ENCODE measurements at regions of chr5 and their contacts with region 1.

Region 1: GRCh38 chr5:135140805-135141204 is 106.8 kb upstream of the PITX1 start:
- DNase-seq: no peak

Region 2: GRCh38 chr5:135151256-135151655 is 10.5 kb after region 1 on chr5:
- intact Hi-C with region 1: no loop called
- DNase-seq: no peak

Region 3: DNA sequence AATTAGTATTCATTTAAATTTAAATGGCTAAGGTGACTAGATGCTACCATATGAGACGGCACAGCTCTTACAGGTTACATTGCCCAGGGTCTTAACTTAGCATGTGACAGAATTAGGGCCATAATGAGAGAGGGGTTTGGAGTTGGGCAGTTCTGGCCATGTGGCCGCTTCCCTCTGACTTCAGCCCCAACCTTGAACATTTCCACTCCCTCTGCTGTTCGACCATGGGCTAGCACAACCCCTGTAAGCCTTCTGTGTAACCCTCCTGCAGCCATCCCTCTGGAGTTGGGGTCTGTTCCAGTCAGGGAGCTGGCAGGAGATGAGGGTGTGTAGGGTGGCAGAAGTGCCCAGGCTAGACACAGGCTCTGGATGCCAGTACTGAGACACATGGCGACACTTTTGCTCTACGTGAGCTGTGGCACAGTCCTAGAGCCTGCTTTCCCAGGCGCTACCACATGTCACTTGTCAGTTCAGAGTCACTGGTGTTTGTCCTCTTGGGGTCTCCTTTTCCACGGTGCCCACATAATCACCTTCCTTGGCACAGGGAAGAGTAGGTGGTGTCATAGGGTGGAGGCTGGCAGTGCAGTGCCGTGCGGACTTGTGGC is 22.0 kb after region 1 on chr5:
- intact Hi-C with region 1: loop called in 1 of 2 experiments (anchors 1 kb)
- DNase-seq: no peak

Measured in posterior vena cava (tissue), 2 donors.